ENCODE measurements at regions of chr7 and their contacts with region 1.

Region 1: DNA sequence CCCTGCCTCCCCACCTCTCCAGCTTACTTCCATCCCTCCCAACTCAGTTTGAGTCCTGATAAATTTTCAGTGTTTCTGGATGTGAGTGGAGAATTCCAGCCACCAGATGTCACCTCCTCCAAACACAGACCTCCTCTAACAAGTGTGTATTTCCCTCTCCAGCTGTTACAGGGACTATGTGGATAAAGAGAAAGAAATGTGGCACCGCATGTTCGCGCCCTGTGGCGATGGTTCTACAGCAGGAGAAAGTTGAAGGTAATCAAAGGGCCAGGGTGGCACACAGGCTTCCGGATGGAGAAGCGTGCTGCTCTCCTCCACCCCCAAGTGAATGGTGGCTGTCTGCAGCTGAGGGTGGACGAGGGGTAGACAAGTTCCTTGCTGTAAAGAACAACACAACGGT is 14.7 kb downstream of the FKBP6 start:
- DNase-seq: peak in 1 of 2 donors; percentile 16
- ATAC-seq: peak in 7 of 8 donors; percentile 75 to 88 (median 81)
- H3K4me3 ChIP-seq: peak overlapping the region in 4 of 10 donors; percentile 11 to 21 (median 20)
- H3K27ac ChIP-seq: no peak overlapping the region
- H3K4me1 ChIP-seq: peaks cover 0 to 7% (median 0%) of the 10 kb centered on the region in 9 donors
- H3K27me3 ChIP-seq: peaks cover 0 to 28% (median 9%) of the 10 kb centered on the region in 7 donors
- CTCF ChIP-seq: peak in 8 of 9 donors; percentile 10 to 67 (median 50)

Region 2: DNA sequence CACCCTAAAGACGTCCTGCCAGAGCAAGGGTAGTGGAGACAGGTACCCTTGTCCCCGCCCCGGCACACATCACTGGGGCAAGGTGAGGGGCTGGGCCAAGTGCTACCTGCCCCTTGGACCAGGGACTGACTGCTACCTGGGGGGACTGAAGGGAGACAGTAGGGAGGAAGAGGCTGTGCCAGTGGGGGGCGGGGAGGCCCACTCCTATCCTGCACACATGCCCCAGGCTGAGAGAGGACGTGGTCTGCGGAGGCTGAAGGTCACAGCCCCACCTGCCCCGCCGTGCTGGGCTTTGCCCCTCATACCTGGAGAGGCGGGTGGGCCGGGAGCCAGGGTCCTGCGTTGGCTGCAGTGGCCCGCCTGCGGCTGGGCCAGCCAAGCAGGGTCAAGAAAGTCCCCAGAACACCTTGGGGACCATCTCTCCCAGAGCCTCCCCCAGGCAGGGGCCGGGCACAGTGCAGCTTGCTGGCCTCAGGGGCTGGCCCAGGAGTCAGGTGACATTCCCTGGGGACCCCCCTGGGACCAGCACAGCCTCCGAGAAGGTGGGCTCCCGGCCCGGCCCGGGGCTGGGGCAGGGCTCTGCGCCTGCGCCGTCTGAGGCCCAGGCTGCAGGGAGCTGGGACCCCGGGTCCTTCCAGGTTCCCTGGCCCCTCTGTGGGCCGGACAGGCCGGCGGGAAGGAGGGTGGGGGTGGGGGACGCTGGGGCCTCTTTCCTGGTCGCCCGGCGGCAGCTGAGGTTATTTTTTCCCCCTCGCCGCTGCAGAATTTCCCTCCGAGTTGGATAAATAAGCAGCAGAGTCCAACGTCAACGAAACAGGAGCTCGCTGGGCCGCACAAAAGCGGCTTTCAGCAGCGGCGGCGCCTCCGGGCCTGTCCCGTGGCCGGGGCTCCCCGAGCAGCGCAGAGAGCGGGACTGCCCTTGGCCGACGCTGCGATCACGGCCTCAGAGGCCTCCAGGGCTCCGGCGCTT is 81.2 kb after region 1 on chr7:
- intact Hi-C with region 1: loop called in 1 of 10 experiments (anchors 10 kb)
- DNase-seq: peak; percentile 24 to 40
- ATAC-seq: peak; percentile 45 to 79 (median 72)
- H3K4me3 ChIP-seq: peak overlapping the region in 9 of 10 donors; percentile 25 to 51 (median 46)
- H3K27ac ChIP-seq: peak overlapping the region in 5 of 10 donors; percentile 16 to 62 (median 47)
- H3K4me1 ChIP-seq: peaks cover 0 to 12% (median 9%) of the 10 kb centered on the region in 9 donors
- H3K27me3 ChIP-seq: peaks cover 0 to 9% (median 2%) of the 10 kb centered on the region in 7 donors
- CTCF ChIP-seq: no peak

Region 3: DNA sequence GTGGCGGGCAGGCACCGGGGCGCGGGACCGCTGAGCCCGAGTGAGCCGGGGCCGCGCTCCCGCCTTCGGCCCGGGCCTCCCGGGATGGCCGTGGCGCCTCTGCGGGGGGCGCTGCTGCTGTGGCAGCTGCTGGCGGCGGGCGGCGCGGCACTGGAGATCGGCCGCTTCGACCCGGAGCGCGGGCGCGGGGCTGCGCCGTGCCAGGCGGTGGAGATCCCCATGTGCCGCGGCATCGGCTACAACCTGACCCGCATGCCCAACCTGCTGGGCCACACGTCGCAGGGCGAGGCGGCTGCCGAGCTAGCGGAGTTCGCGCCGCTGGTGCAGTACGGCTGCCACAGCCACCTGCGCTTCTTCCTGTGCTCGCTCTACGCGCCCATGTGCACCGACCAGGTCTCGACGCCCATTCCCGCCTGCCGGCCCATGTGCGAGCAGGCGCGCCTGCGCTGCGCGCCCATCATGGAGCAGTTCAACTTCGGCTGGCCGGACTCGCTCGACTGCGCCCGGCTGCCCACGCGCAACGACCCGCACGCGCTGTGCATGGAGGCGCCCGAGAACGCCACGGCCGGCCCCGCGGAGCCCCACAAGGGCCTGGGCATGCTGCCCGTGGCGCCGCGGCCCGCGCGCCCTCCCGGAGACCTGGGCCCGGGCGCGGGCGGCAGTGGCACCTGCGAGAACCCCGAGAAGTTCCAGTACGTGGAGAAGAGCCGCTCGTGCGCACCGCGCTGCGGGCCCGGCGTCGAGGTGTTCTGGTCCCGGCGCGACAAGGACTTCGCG is 91.5 kb after region 1 on chr7:
- intact Hi-C with region 1: loop called in 2 of 10 experiments (anchors 5 to 10 kb)
- DNase-seq: no peak
- ATAC-seq: peak in 2 of 8 donors; percentile 5 to 13
- H3K4me3 ChIP-seq: peak overlapping the region in 8 of 10 donors; percentile 26 to 48 (median 42)
- H3K27ac ChIP-seq: no peak overlapping the region
- H3K4me1 ChIP-seq: peaks cover 0 to 13% (median 4%) of the 10 kb centered on the region in 9 donors
- H3K27me3 ChIP-seq: peaks cover 0 to 42% (median 31%) of the 10 kb centered on the region in 7 donors
- CTCF ChIP-seq: no peak

Region 4: DNA sequence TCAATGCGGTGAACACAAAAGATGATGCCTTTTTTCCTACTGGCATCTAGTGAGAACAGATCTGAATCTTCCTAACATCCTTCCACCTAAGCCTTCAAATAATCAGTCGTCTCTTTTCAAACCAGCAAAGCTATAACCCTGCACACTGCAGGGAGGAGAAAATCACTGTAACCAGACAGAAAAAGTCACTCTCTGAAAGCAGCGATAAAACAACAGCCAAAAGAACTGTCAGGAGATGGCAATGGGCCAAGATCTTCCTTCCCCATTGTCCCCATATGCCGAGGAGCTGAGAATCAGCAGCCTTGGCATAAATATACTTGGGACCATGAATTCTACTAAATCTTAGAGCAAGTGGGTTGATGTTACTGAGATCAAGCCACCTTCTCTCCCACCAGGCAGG is 104.0 kb after region 1 on chr7:
- intact Hi-C with region 1: loop called in 9 of 10 experiments (anchors 1 to 10 kb)
- DNase-seq: no peak
- ATAC-seq: no peak
- H3K4me3 ChIP-seq: no peak overlapping the region
- H3K27ac ChIP-seq: no peak overlapping the region
- H3K4me1 ChIP-seq: peaks cover 0 to 10% (median 0%) of the 10 kb centered on the region in 9 donors
- H3K27me3 ChIP-seq: no peaks in the 10 kb centered on the region
- CTCF ChIP-seq: no peak

Region 5: DNA sequence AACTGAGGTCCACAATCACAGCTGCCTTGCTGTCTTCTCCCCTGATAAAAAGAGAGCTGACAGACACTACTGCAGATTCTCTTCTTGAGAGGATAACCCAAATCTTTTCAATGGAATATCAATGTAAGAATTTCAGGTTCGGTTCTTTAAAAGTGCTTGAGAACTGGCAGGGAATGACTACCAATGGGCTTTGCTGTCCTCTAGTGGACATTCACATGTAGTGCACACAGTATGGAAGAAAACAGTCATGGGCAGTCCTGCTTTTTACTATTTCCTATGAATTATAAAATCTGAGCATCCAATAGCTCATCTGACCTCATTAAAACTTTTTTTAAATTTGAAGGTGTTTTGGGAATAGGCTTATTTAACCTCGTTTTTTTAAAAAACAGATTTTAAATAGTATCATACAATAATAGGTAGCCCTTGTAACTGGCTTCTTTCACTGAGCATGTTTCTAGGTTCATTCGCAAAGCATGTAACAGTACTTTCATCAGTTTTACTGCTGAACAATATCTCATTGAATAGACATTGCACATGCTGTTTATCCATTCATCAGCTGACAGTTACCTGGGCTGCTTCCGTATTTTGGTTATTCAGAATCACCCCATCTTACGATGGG is 109.2 kb after region 1 on chr7:
- intact Hi-C with region 1: loop called (anchors 1 to 10 kb)
- DNase-seq: no peak
- ATAC-seq: peak in 7 of 8 donors; percentile 61 to 77 (median 67)
- H3K4me3 ChIP-seq: no peak overlapping the region
- H3K27ac ChIP-seq: no peak overlapping the region
- H3K4me1 ChIP-seq: peaks cover 0 to 6% (median 0%) of the 10 kb centered on the region in 9 donors
- H3K27me3 ChIP-seq: no peaks in the 10 kb centered on the region
- CTCF ChIP-seq: peak; percentile 94 to 100 (median 98)

Region 6: DNA sequence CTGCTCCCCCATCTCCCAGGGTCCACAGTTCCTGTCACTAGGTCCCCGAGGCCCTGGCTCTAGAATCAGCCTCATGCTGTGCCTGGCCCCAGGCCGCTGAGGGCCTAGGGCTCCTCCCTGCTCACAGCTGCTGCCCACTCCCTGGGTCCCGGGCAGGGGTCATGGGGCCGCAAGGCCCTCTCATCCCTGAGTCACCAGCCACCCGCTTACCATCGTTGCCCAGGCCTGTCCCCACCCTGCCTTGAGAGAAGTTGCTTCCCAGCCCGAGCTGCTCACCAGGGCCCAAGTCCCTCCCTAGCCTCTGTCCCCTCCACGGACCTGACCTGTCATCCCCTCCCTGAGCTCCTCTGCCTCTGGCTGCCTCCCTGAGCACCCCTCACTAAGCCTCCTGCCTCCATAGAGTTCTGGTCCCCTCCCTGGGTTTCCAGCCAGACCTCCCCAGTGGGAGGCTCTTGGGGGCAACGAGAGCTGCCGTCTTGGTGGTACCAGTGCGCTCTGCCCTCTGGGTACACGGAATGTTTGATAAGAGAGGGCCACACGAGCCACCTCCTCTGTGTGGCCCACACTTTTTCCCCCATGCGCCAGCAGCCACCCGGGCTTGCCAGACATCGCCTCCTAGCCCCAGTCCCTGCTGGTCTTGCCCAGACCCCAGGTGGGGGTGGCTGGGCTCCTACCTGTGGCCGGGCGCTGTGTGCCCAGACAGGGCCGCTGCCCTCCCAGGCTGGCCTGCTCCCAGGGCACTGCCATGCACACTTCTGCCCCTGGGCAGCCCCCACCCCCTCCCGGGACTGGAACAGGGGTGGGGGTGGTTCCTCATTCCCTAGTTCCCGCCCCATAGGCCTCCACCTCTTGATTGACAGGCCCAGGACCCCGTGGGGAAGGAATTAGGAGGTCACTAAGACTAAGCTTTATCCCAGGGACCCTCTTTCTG is 260.3 kb after region 1 on chr7:
- intact Hi-C with region 1: no loop called
- DNase-seq: no peak
- ATAC-seq: peak in 1 of 8 donors; percentile 13
- H3K4me3 ChIP-seq: no peak overlapping the region
- H3K27ac ChIP-seq: no peak overlapping the region
- H3K4me1 ChIP-seq: peaks cover 0 to 7% (median 0%) of the 10 kb centered on the region in 9 donors
- H3K27me3 ChIP-seq: peaks cover 5 to 70% (median 43%) of the 10 kb centered on the region in 7 donors
- CTCF ChIP-seq: no peak